ENCODE measurements at regions of chr12 and their contacts with region 1.

Region 1: DNA sequence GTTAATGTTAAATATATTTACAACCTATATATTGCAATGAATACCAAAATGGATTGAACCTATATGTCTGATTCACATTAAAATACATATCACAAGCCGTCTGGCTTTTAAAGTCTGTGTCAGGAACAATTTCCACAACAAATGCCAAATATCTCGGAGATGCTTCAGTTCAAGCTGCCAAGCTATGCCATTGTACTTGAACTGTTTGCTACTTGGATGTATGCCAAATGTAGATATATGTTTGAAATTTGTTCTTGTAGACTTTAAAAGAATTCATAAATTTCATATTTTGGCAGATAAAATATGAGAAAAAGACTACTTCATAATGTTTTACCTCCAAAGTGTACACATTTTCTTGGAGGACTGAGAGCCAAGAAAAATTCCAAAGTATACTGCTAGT is 37.0 kb downstream of the WASHC3 start:
- DNase-seq: no peak
- H3K4me3 Mint-ChIP-seq: no peak overlapping the region
- H3K27ac Mint-ChIP-seq: no peak overlapping the region
- H3K4me1 Mint-ChIP-seq: peaks cover 2% of the 10 kb centered on the region
- H3K27me3 Mint-ChIP-seq: no peaks in the 10 kb centered on the region

Region 2: DNA sequence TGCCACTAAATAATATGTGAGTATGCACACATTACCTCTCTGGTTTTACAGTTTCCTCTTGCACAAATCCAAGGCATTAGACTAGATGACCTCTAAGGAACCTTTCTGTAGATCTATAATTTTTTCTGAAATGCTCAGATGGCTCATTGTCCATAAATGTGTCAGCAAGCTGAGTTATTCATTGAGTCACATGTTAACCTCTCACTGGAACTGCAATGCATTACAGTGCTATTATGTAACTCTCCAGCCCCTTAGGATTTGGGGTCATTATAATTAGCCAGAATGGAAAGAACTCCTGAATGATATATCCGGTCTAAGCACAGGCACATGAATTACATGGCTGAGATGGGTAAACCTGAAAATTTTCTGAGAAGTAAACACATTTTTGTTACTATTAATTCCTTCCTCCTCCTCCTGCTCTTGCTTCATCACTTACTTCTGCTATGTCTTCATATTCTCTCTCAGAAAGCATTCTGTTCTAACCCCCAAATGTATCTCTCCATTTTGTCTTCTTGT is 167.7 kb before region 1 on chr12:
- intact Hi-C with region 1: no loop called
- DNase-seq: no peak
- H3K4me3 Mint-ChIP-seq: no peak overlapping the region
- H3K27ac Mint-ChIP-seq: no peak overlapping the region
- H3K4me1 Mint-ChIP-seq: peaks cover 38% of the 10 kb centered on the region
- H3K27me3 Mint-ChIP-seq: no peaks in the 10 kb centered on the region

Region 3: DNA sequence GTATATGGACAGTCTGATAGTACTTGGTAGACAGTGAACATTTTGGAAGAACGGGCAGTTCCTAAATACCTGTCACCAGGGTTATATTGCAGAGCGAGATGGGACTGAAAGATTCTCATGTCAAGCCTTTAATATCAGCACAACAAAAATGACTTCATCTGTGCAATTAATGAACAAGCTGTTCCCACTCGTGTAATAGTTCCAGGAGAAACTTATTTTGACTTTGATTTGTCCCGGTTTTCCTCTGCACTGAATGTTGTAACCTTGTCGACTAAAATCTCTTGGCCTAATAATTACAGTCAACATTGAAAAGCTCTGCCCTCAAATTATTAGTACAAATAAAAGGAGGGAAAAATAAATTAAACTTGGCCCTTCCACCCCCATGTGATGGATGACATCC is 42.5 kb before region 1 on chr12:
- intact Hi-C with region 1: loop called (anchors 1 kb)
- DNase-seq: no peak
- H3K4me3 Mint-ChIP-seq: no peak overlapping the region
- H3K27ac Mint-ChIP-seq: no peak overlapping the region
- H3K4me1 Mint-ChIP-seq: no peaks in the 10 kb centered on the region
- H3K27me3 Mint-ChIP-seq: peaks cover 17% of the 10 kb centered on the region

Region 4: GRCh38 chr12:101995684-101996083 is 29.1 kb before region 1 on chr12:
- intact Hi-C with region 1: no loop called
- DNase-seq: no peak
- H3K4me3 Mint-ChIP-seq: no peak overlapping the region
- H3K27ac Mint-ChIP-seq: no peak overlapping the region
- H3K4me1 Mint-ChIP-seq: no peaks in the 10 kb centered on the region
- H3K27me3 Mint-ChIP-seq: peaks cover 22% of the 10 kb centered on the region